CD8-positive, alpha-beta T cell (primary cell): ENCODE measurements at regions of chr18 and their contacts with region 1.

Region 1: GRCh38 chr18:74495581-74496507 is at the start of gene CNDP2:
- DNase-seq: peak; percentile 93 to 99 (median 99)
- ATAC-seq: peak; percentile 69
- H3K4me3 ChIP-seq: peak within 1 kb of the TSS; percentile 81
- H3K4me3 Mint-ChIP-seq: peak within 1 kb of the TSS; percentile 94
- H3K27ac ChIP-seq: peak within 1 kb of the TSS; percentile 87 to 90
- H3K27ac Mint-ChIP-seq: peak within 1 kb of the TSS; percentile 97
- H3K4me1 ChIP-seq: peaks cover 37% of the 10 kb centered on the region
- H3K4me1 Mint-ChIP-seq: peaks cover 58% of the 10 kb centered on the region
- H3K27me3 ChIP-seq: no peaks in the 10 kb centered on the region
- H3K27me3 Mint-ChIP-seq: no peaks in the 10 kb centered on the region
- CTCF ChIP-seq: no peak
- total RNA-seq, gene CNDP2: 51.7 to 55.8 TPM

Region 2: DNA sequence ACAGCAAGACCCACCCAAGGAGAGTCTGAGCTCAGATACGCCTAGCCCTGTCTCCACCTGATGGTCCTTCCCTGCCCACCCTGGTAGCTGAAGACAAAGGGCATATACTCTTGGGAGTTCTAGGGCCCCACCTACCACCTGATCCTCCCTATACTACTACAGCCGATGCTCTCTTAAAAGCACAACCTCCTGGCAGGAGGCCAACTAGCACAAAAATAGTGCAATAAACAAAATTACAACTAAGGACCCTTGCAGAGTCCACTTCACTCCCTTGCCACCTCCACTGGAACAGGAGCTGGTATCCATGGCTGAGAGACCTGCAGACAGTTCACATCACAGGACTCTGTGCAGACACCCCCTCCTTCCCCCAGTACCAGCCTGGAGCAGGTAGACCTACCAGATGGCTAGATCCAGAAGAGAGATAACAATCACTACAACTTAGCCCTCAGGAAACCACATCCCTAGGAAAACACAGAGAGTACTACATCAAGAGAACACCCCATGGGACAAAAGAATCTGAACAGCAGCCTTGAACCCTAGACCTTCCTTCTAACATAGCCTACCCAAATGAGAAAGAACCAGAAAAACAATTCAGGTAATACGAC is 398.1 kb before region 1 on chr18:
- CTCF ChIA-PET with region 1: no interaction called
- POLR2A ChIA-PET with region 1: no interaction called
- intact Hi-C with region 1: no loop called
- DNase-seq: no peak
- ATAC-seq: no peak
- H3K4me3 ChIP-seq: no peak overlapping the region
- H3K4me3 Mint-ChIP-seq: no peak overlapping the region
- H3K27ac ChIP-seq: no peak overlapping the region
- H3K27ac Mint-ChIP-seq: no peak overlapping the region
- H3K4me1 ChIP-seq: no peaks in the 10 kb centered on the region
- H3K4me1 Mint-ChIP-seq: no peaks in the 10 kb centered on the region
- H3K27me3 ChIP-seq: no peaks in the 10 kb centered on the region
- H3K27me3 Mint-ChIP-seq: peaks cover 2% of the 10 kb centered on the region
- CTCF ChIP-seq: no peak

Region 3: DNA sequence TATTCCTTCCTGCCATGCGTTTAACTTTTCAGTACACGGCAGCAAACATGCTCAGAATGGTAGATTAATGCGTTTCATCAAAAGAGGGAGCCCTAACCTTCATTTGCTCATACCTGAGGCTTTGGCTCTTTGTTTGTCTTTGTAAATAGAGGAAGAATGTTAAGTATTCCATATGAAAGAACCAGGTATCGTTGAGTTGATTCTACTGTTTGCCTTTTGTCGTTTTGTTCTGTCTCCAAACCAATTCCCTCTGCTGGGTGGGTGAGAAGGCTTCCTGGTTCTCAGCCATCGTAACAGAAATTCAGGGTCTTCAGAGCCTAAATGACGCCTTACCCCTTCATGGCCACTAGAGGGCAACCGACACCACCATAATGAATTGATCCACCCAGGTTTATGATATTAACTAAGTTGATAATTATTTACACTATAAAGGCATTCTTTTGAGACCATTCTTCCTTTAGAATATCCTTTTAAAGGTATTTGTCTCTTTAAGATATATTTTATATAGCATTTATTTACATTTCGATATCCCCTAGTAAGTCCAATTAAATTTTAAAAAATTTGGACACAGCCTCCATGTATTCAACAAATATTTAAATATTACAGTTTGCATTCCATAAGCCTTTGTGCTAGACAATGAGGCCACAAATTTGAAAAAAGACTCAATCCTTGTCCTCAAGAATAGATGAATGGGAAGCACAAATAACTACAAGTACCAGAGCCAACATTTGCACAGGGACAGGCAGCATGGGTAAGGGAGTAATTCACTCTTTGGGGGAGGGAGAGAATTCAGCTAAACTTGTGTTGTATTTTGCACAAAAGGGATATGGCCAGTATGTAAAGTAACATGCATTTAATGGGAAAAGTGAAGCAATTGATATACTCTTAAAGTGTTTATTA is 299.4 kb before region 1 on chr18:
- CTCF ChIA-PET with region 1: interaction called, 15 read pairs
- POLR2A ChIA-PET with region 1: no interaction called
- intact Hi-C with region 1: loop called (anchors 1 kb)
- DNase-seq: peak; percentile 8 to 86 (median 46)
- ATAC-seq: peak; percentile 98
- H3K4me3 ChIP-seq: peak overlapping the region; percentile 21 to 42
- H3K4me3 Mint-ChIP-seq: peak overlapping the region; percentile 79
- H3K27ac ChIP-seq: no peak overlapping the region
- H3K27ac Mint-ChIP-seq: peak overlapping the region; percentile 85
- H3K4me1 ChIP-seq: peaks cover 4% of the 10 kb centered on the region
- H3K4me1 Mint-ChIP-seq: peaks cover 6% of the 10 kb centered on the region
- H3K27me3 ChIP-seq: no peaks in the 10 kb centered on the region
- H3K27me3 Mint-ChIP-seq: peaks cover 18% of the 10 kb centered on the region
- CTCF ChIP-seq: peak; percentile 89

Region 4: GRCh38 chr18:74342416-74343043 is 153.3 kb before region 1 on chr18:
- CTCF ChIA-PET with region 1: interaction called, 340 read pairs
- POLR2A ChIA-PET with region 1: interaction called, 4 read pairs
- intact Hi-C with region 1: no loop called
- DNase-seq: peak in 5 of 9 experiments; percentile 22 to 75 (median 41)
- ATAC-seq: no peak
- H3K4me3 ChIP-seq: no peak overlapping the region
- H3K4me3 Mint-ChIP-seq: no peak overlapping the region
- H3K27ac ChIP-seq: no peak overlapping the region
- H3K27ac Mint-ChIP-seq: no peak overlapping the region
- H3K4me1 ChIP-seq: no peaks in the 10 kb centered on the region
- H3K4me1 Mint-ChIP-seq: no peaks in the 10 kb centered on the region
- H3K27me3 ChIP-seq: no peaks in the 10 kb centered on the region
- H3K27me3 Mint-ChIP-seq: peaks cover 7% of the 10 kb centered on the region
- CTCF ChIP-seq: peak; percentile 74

Region 5: GRCh38 chr18:74370115-74370514 is 125.7 kb before region 1 on chr18:
- CTCF ChIA-PET with region 1: interaction called, 39 read pairs
- POLR2A ChIA-PET with region 1: interaction called, 18 read pairs
- intact Hi-C with region 1: loop called (anchors 1 to 5 kb)
- DNase-seq: no peak
- ATAC-seq: no peak
- H3K4me3 ChIP-seq: no peak overlapping the region
- H3K4me3 Mint-ChIP-seq: no peak overlapping the region
- H3K27ac ChIP-seq: no peak overlapping the region
- H3K27ac Mint-ChIP-seq: no peak overlapping the region
- H3K4me1 ChIP-seq: peaks cover 55% of the 10 kb centered on the region
- H3K4me1 Mint-ChIP-seq: peaks cover 56% of the 10 kb centered on the region
- H3K27me3 ChIP-seq: peaks cover 0 to 3% of the 10 kb centered on the region in 2 experiments
- H3K27me3 Mint-ChIP-seq: peaks cover 2% of the 10 kb centered on the region
- CTCF ChIP-seq: no peak

Region 6: GRCh38 chr18:74551936-74552555 is 56.2 kb after region 1 on chr18:
- CTCF ChIA-PET with region 1: interaction called, 12 read pairs
- POLR2A ChIA-PET with region 1: interaction called, 3 read pairs
- intact Hi-C with region 1: loop called in 1 of 2 experiments (anchors 1 kb)
- DNase-seq: peak; percentile 55 to 85 (median 78)
- ATAC-seq: peak; percentile 91
- H3K4me3 ChIP-seq: no peak overlapping the region
- H3K4me3 Mint-ChIP-seq: no peak overlapping the region
- H3K27ac ChIP-seq: no peak overlapping the region
- H3K27ac Mint-ChIP-seq: no peak overlapping the region
- H3K4me1 ChIP-seq: no peaks in the 10 kb centered on the region
- H3K4me1 Mint-ChIP-seq: no peaks in the 10 kb centered on the region
- H3K27me3 ChIP-seq: no peaks in the 10 kb centered on the region
- H3K27me3 Mint-ChIP-seq: peaks cover 13% of the 10 kb centered on the region
- CTCF ChIP-seq: peak; percentile 92

Region 7: GRCh38 chr18:76492669-76493212 is 1996.9 kb after region 1 on chr18:
- CTCF ChIA-PET with region 1: no interaction called
- POLR2A ChIA-PET with region 1: no interaction called
- intact Hi-C with region 1: loop called (anchors 5 kb)
- DNase-seq: peak; percentile 93 to 100 (median 97)
- ATAC-seq: peak; percentile 69
- H3K4me3 ChIP-seq: peak overlapping the region; percentile 66 to 99
- H3K4me3 Mint-ChIP-seq: peak overlapping the region; percentile 92
- H3K27ac ChIP-seq: peak overlapping the region; percentile 46 to 66
- H3K27ac Mint-ChIP-seq: peak overlapping the region; percentile 87
- H3K4me1 ChIP-seq: peaks cover 19% of the 10 kb centered on the region
- H3K4me1 Mint-ChIP-seq: peaks cover 37% of the 10 kb centered on the region
- H3K27me3 ChIP-seq: peaks cover 0 to 9% of the 10 kb centered on the region in 2 experiments
- H3K27me3 Mint-ChIP-seq: peaks cover 28% of the 10 kb centered on the region
- CTCF ChIP-seq: no peak